ENCODE measurements at regions of chr9 and their contacts with region 1.

Region 1: DNA sequence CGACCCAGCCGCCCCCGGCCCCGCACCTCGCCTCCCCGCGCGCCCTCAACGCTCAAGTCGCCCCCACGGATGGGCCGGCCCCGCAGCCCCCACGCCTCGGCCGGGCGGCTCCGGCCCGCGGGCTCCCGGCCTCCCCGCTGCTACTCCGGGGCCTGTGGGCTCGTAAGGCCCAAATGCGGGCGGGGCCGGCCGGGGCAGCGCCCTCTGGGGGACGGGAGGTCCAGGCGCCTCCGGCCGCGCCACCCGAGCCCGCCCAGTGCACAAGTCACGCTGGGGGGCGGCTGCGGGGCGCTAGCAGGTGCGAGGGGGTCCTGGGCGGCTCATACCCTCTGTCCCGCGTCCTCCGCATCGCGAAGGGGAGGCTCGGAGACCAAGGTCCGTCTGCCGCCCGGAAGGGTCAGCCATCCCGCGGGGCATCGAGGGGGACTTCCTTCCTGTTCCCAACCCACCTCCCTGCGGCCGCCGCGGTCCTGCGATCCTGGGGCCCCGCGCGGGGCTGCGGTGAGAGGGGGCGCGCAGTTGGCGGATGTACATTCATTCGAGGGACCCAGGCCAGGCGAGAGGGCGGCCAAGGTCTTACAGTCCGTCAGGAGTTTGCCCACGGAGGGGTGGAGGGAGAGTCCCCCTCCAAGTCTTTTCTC is at the start of gene CIZ1:
- DNase-seq: peak; percentile 93
- H3K4me3 Mint-ChIP-seq: peak within 1 kb of the TSS; percentile 100
- H3K27ac Mint-ChIP-seq: peak within 1 kb of the TSS; percentile 92
- H3K4me1 Mint-ChIP-seq: peaks cover 29% of the 10 kb centered on the region
- H3K27me3 Mint-ChIP-seq: no peaks in the 10 kb centered on the region
- total RNA-seq, gene CIZ1: 142 and 143 TPM in 2 replicates

Region 2: GRCh38 chr9:128203024-128203706 is 11.6 kb after region 1 on chr9 and contains the start of gene DNM1:
- intact Hi-C with region 1: loop called (anchors 1 kb)
- DNase-seq: peak; percentile 95
- H3K4me3 Mint-ChIP-seq: peak within 1 kb of the TSS; percentile 72
- H3K27ac Mint-ChIP-seq: peak within 1 kb of the TSS; percentile 64
- H3K4me1 Mint-ChIP-seq: peaks cover 16% of the 10 kb centered on the region
- H3K27me3 Mint-ChIP-seq: peaks cover 32% of the 10 kb centered on the region
- total RNA-seq, gene DNM1: 0.95 and 1.5 TPM in 2 replicates